Esophagus muscularis mucosa (tissue), 4 donors: ENCODE measurements at regions of chr2 and their contacts with region 1.

Region 1: GRCh38 chr2:222057347-222058073 is 241.3 kb downstream of the PAX3 start:
- DNase-seq: no peak
- H3K4me3 ChIP-seq: peak overlapping the region in 1 of 4 donors; percentile 12
- H3K27ac ChIP-seq: no peak overlapping the region
- H3K4me1 ChIP-seq: no peaks in the 10 kb centered on the region
- H3K27me3 ChIP-seq: peaks cover 0 to 70% (median 3%) of the 10 kb centered on the region in 4 donors
- CTCF ChIP-seq: peak; percentile 33 to 60 (median 52)
- EP300 ChIP-seq: no peak
- POLR2A ChIP-seq: no peak

Region 2: GRCh38 chr2:222613715-222614331 is 556.3 kb after region 1 on chr2:
- intact Hi-C with region 1: loop called (anchors 10 kb)
- DNase-seq: no peak
- H3K4me3 ChIP-seq: no peak overlapping the region
- H3K27ac ChIP-seq: no peak overlapping the region
- H3K4me1 ChIP-seq: no peaks in the 10 kb centered on the region
- H3K27me3 ChIP-seq: no peaks in the 10 kb centered on the region
- CTCF ChIP-seq: peak; percentile 73 to 82 (median 77)
- EP300 ChIP-seq: no peak
- POLR2A ChIP-seq: no peak